ENCODE measurements at regions of chr7 and their contacts with region 1.

Region 1: DNA sequence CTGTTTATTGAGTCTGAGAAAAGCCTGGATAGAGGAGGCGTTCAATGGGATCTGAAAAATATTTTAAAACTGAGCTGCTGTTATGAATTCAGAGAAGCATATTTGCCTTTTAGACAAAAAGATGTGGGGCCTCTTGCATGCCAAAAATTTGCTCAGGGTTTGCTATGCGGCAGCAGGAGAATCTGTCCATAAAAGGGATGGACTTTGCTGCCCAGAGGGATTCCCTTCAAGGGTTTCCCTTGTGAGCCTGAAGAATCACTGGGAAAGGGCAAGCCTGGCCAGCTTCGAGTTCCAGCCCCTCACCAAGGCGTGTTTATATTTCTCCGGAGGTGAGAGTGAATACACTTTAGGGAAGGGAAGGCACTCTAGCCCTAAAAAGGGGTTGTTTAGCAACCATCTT is 55.5 kb upstream of the CALD1 start:
- DNase-seq: no peak
- H3K4me3 ChIP-seq: no peak overlapping the region
- H3K27ac ChIP-seq: no peak overlapping the region
- H3K4me1 ChIP-seq: no peaks in the 10 kb centered on the region
- H3K27me3 ChIP-seq: no peaks in the 10 kb centered on the region
- CTCF ChIP-seq: no peak

Region 2: GRCh38 chr7:134388336-134389019 is 335.4 kb before region 1 on chr7:
- CTCF ChIA-PET with region 1: interaction called, 13 read pairs
- POLR2A ChIA-PET with region 1: no interaction called
- intact Hi-C with region 1: no loop called
- DNase-seq: no peak
- H3K4me3 ChIP-seq: no peak overlapping the region
- H3K27ac ChIP-seq: no peak overlapping the region
- H3K4me1 ChIP-seq: no peaks in the 10 kb centered on the region
- H3K27me3 ChIP-seq: peaks cover 6% of the 10 kb centered on the region
- CTCF ChIP-seq: no peak

Region 3: GRCh38 chr7:134710859-134711624 is 12.8 kb before region 1 on chr7:
- CTCF ChIA-PET with region 1: interaction called, 10 read pairs
- POLR2A ChIA-PET with region 1: no interaction called
- intact Hi-C with region 1: no loop called
- DNase-seq: no peak
- H3K4me3 ChIP-seq: no peak overlapping the region
- H3K27ac ChIP-seq: no peak overlapping the region
- H3K4me1 ChIP-seq: no peaks in the 10 kb centered on the region
- H3K27me3 ChIP-seq: no peaks in the 10 kb centered on the region
- CTCF ChIP-seq: no peak

Region 4: DNA sequence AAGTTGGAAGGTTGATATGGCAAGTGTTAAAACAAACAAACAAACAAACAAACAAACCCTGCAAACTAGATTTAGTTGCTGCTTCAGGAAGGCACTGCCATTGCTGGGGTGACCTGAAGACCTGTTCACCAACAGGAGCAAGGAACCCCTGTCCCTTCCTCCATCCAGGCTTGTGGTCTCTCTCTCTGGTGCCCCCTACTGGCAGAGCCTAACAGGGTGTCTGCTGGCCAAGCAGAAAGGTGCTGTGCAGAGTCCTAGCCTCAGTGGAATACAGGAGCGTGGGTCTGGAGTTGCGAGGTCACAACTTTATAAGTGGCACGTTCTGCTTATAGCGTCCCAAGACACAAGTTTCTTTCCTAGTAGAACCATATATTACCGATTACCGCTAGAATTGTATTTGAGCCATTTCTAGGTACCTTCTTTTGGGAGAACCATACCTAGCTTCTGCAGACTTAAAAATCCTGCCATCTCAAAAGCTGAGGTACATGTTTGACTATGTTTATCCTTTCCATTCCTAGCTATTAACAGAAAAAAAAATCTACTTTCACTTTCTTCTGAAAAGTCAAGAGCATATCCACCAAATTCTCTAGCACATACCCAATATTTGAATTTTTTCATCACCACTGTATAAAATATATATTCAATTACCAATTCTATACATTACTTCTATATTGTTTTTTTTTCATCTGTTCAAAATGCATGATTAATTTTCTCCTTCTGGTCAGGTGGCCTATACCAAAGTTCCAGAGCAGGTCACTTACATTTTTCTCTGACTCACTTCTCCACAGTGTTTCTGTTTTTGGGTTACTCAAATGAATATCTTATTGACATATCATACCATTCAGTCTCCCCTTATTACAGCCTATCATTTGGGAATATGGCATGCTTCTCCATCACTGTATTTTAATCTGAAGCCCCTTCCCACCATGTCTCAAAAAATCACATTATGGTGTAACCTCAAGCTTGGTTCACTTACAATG is 26.5 kb after region 1 on chr7:
- CTCF ChIA-PET with region 1: no interaction called
- POLR2A ChIA-PET with region 1: no interaction called
- intact Hi-C with region 1: no loop called
- DNase-seq: peak; percentile 57
- H3K4me3 ChIP-seq: no peak overlapping the region
- H3K27ac ChIP-seq: no peak overlapping the region
- H3K4me1 ChIP-seq: peaks cover 5% of the 10 kb centered on the region
- H3K27me3 ChIP-seq: no peaks in the 10 kb centered on the region
- CTCF ChIP-seq: peak; percentile 89

Measured in A673 (cell line).